ENCODE measurements at regions of chr15 and their contacts with region 1.

Region 1: DNA sequence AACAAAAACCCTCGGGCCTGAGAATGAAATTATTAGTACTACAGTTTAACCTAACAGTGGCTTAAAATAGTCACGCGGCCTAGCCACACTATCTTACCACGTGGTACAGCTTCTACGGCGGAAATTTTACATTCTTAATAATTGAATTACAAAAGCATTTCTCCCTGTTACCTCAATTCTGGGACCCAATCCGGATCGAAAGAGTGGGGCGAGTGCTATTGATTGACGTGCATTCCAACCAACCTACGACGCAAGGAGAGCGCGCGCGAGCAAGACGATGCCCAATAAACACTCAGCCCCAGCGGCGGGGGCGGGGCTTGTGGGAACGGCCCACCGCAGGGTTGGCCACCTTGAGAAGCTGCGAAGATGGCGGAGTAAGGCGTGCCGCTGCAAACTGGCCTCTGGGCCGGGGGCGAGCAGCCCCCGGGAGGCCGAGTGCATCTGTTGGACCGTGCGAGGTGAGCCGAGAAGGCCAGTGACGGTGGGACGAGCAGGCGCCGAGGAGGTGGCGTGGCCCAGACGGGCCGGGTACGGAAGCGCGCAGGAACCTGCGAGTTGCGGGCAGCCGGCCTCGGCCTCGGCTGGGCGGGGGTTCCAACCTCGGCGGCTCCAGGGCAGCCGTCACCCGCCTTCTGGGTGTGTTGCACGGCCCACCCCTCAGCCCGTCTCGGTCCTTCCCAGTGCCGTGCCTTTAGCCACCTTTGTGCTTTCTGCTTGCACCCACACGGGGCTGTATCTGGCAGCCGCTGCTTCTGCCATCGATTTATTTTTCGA is 48.6 kb downstream of the OIP5 start:
- DNase-seq: peak; percentile 91 to 99 (median 98)

Region 2: GRCh38 chr15:41079717-41080116 is 204.1 kb before region 1 on chr15:
- intact Hi-C with region 1: no loop called
- DNase-seq: no peak

Region 3: DNA sequence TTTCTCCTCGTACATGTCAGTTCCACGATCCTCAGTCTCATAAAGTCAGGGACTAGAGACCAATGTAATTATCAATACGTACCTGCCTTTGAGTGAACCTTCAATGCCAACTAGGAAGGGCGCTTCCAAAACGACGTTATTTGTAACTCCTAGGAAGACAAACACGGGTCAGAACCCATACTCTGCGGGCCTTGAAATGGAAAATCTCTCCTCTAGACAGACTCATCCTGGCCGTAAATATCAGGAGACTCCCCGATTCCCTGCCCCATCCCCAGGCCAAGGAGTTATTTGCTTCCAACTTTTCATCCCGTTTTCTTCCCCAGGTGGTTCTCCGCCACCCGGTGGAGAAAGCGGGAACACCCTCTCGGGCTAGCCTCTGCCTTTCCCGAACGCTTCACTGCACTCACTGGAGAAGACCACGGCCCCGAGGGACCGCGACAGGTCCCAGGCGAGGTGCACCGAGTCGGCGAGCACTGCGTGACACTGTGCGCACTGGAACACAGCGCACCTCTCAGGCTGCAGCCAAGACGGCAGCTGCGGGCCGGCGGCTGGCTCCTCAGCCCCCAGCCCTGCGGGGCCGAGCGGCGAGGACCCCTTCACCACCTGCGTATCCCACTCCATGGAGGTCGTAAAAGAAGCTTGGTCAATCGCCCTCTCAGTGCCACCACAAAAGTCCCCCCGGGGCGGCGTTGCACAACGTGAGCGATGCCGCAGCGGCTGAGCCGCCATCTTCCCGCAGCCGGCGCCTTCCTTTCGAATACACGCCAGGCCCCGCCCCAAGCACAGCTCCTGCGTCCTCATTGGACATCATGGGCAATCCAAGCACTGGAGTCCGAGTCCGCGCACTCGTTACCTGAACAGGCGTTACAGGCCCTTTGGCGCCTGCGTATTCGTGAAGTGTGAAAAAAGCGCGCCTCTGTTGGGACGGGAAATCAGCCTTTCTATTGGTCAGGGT is 48.3 kb after region 1 on chr15 and contains the start of gene OIP5:
- intact Hi-C with region 1: loop called (anchors 2 kb)
- DNase-seq: peak; percentile 89 to 99 (median 94)